ENCODE measurements at regions of chr17 and their contacts with region 1.

Region 1: DNA sequence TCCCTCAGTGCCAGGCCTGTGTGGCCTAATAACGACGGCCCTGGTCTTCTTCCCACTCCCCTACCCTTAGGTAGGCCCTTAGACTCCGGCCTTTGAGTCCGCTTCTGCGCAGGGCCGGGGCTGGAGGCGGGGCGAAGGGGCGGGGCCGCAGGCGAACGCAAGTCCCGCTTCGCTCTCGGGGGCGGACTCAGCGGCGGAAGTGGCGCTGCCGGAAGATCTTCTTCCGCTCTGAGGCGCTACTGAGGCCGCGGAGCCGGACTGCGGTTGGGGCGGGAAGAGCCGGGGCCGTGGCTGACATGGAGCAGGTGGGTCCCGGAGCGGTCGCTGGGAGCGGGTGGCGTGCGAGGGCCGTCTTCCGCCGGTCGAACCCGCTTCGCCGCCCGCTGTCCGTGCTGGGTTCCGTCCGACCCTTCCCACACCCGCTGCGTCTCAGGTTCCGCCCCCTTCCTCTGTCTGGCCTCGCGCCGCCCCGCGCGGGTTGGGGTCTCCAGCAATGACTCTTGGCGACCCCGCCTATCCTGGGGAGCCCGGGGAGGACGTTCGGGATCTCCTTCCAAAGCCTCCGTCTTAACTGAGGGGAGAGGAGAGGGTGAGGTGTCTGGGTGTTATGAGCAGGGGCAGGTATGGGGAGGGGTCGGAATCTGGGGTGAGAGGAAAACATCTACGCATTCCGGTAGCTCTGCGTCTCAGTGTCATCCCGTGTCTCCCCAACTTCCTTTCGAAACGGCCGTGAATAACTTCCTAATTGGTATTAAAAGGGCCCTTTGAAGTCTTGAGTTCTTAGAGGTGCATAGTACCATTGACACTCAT is at the start of gene STARD3:
- DNase-seq: peak; percentile 88
- H3K4me3 Mint-ChIP-seq: peak within 1 kb of the TSS; percentile 94
- H3K27ac Mint-ChIP-seq: peak within 1 kb of the TSS; percentile 85
- H3K4me1 Mint-ChIP-seq: peaks cover 34% of the 10 kb centered on the region
- H3K27me3 Mint-ChIP-seq: peaks cover 2% of the 10 kb centered on the region
- total RNA-seq, gene STARD3: 54.7 and 65.3 TPM in 2 replicates

Region 2: GRCh38 chr17:39450847-39451581 is 186.1 kb before region 1 on chr17 and contains the start of gene MED1:
- intact Hi-C with region 1: no loop called
- DNase-seq: peak; percentile 92
- H3K4me3 Mint-ChIP-seq: peak within 1 kb of the TSS; percentile 99
- H3K27ac Mint-ChIP-seq: peak within 1 kb of the TSS; percentile 93
- H3K4me1 Mint-ChIP-seq: peaks cover 25% of the 10 kb centered on the region
- H3K27me3 Mint-ChIP-seq: no peaks in the 10 kb centered on the region
- total RNA-seq, gene MED1: 72.0 and 73.4 TPM in 2 replicates

Region 3: DNA sequence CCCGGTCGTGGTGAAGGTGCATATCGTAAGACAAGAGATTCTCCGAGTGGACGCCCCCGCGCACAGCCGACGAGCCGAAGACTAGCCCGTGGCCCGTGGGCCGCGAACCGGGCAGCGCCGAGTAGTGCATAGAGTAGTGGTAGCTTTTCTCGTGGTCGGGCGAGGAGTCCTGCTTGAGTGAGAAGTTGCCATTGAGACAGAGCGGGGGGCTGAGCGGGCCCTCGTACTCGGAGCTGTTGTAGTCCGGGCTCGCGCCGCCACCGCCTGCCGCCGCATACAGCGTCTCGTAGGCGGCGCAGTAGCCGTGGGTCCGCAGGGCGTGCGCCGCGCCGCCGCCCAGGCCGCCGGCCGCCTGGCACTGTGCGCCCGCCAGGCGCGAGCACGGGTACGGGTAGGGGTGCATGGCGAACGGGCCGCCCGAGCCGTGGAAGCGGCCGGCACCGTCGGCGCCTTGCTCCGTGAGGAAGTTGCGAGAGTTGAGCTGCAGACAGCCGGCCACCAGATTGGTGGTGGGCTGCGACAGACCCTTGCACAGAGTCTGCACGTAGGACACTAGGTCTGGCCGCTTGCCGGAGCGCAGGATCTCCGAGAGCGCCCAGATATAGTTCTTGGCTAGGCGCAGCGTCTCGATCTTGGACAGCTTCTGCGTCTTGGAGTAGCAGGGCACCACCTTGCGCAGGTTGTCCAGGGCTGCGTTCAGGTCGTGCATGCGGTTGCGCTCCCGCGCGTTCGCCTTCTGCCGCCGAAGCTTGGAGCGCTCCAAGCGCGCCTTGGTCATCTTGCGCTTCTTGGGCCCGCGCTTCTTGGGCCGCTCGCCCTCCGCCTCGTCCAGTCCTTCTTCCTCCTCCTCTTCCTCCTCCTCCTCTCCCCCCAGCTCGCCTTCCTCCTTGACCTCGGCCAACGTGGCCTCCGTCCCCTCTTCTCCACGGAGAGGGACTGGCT is 31.4 kb before region 1 on chr17:
- intact Hi-C with region 1: no loop called
- DNase-seq: no peak
- H3K4me3 Mint-ChIP-seq: peak overlapping the region; percentile 11
- H3K27ac Mint-ChIP-seq: no peak overlapping the region
- H3K4me1 Mint-ChIP-seq: peaks cover 8% of the 10 kb centered on the region
- H3K27me3 Mint-ChIP-seq: peaks cover 71% of the 10 kb centered on the region

Region 4: GRCh38 chr17:39668199-39668966 is 31.3 kb after region 1 on chr17 and contains the start of gene PNMT:
- intact Hi-C with region 1: loop called (anchors 1 kb)
- DNase-seq: peak; percentile 46
- H3K4me3 Mint-ChIP-seq: peak within 1 kb of the TSS; percentile 37
- H3K27ac Mint-ChIP-seq: peak within 1 kb of the TSS; percentile 29
- H3K4me1 Mint-ChIP-seq: peaks cover 7% of the 10 kb centered on the region
- H3K27me3 Mint-ChIP-seq: peaks cover 29% of the 10 kb centered on the region
- total RNA-seq, gene PNMT: not detected in 2 replicates

Region 5: GRCh38 chr17:39687811-39688518 is 50.8 kb after region 1 on chr17 and contains the start of gene PGAP3:
- intact Hi-C with region 1: loop called (anchors 1 kb)
- DNase-seq: peak; percentile 73
- H3K4me3 Mint-ChIP-seq: peak within 1 kb of the TSS; percentile 94
- H3K27ac Mint-ChIP-seq: peak within 1 kb of the TSS; percentile 69
- H3K4me1 Mint-ChIP-seq: peaks cover 22% of the 10 kb centered on the region
- H3K27me3 Mint-ChIP-seq: no peaks in the 10 kb centered on the region
- total RNA-seq, gene PGAP3: 14.4 and 16.9 TPM in 2 replicates

Region 6: DNA sequence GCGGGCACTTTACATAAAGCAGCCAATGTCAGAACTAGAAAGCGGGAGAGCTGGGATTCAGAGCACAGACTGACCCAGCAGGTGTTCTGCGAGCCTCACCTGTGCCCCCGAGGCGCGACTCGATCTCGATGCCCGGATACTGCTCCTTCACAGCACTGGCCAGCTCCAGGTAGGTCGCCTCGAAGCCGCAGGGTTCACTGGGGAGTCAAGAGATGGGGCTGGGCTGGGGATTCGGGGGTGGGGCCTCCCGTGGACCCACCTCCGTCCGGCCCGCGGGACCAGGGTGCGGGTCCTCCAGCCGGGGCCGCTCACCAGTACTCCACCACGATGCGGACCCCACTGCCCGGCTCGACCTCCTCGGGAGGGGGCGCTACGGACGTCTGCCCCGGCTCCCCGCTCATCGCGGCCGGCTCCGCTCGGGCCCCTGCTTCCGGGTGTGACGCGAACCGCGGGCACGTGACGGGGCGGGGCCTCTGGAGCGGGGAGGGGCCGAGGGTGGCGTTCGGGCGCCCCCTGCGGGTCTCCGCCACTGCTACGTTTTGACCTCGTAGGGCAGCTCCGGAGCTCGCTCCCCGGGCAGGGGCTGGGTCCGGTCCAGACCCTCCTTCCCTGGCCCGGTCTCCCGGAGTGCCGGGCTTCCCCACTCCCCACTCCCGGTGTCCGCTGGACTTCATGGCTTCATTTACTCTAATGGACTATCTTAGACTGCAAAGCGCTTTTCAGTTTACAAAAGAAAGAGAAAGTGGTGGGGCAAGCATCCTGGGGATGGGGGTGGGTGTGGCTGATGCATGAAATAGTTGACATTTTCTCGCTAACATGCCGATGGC is 93.2 kb after region 1 on chr17 and contains the start of gene MIEN1:
- intact Hi-C with region 1: loop called (anchors 1 kb)
- DNase-seq: peak; percentile 90
- H3K4me3 Mint-ChIP-seq: peak within 1 kb of the TSS; percentile 92
- H3K27ac Mint-ChIP-seq: peak within 1 kb of the TSS; percentile 85
- H3K4me1 Mint-ChIP-seq: peaks cover 11% of the 10 kb centered on the region
- H3K27me3 Mint-ChIP-seq: peaks cover 7% of the 10 kb centered on the region
- total RNA-seq, gene MIEN1: 33.3 and 37.1 TPM in 2 replicates